ENCODE measurements at regions of chr22 and their contacts with region 1.

Region 1: GRCh38 chr22:33785283-33785968 is 134.8 kb downstream of the LARGE1 start:
- DNase-seq: no peak
- ATAC-seq: no peak

Region 2: GRCh38 chr22:33726294-33726734 is 59.1 kb before region 1 on chr22:
- intact Hi-C with region 1: loop called (anchors 10 kb)
- DNase-seq: no peak
- ATAC-seq: peak; percentile 84

Region 3: GRCh38 chr22:34001701-34002466 is 216.5 kb after region 1 on chr22:
- intact Hi-C with region 1: no loop called
- DNase-seq: no peak
- ATAC-seq: no peak

Measured in Right ventricle myocardium superior (tissue), 1 donor.